Activated CD8-positive, alpha-beta T cell treated with anti-CD3 and anti-CD28 coated beads, Interleukin-2, amount 10 ng/mL, durations not matched to agents 7 days and 5 days (primary cell): ENCODE measurements at regions of chr14 and their contacts with region 1.

Region 1: GRCh38 chr14:55051426-55052268 is at the start of gene MAPK1IP1L:
- DNase-seq: peak; percentile 91
- ATAC-seq: peak; percentile 96
- H3K4me3 Mint-ChIP-seq: peak within 1 kb of the TSS; percentile 80
- H3K27ac Mint-ChIP-seq: peak within 1 kb of the TSS; percentile 84
- H3K4me1 Mint-ChIP-seq: peaks cover 39% of the 10 kb centered on the region
- H3K27me3 Mint-ChIP-seq: no peaks in the 10 kb centered on the region
- total RNA-seq, gene MAPK1IP1L: 105 to 106 TPM

Region 2: GRCh38 chr14:54691525-54692283 is 359.9 kb before region 1 on chr14:
- CTCF ChIA-PET with region 1: no interaction called
- POLR2A ChIA-PET with region 1: no interaction called
- DNase-seq: peak; percentile 53
- ATAC-seq: peak; percentile 69
- H3K4me3 Mint-ChIP-seq: no peak overlapping the region
- H3K27ac Mint-ChIP-seq: no peak overlapping the region
- H3K4me1 Mint-ChIP-seq: peaks cover 28% of the 10 kb centered on the region
- H3K27me3 Mint-ChIP-seq: peaks cover 31% of the 10 kb centered on the region

Region 3: DNA sequence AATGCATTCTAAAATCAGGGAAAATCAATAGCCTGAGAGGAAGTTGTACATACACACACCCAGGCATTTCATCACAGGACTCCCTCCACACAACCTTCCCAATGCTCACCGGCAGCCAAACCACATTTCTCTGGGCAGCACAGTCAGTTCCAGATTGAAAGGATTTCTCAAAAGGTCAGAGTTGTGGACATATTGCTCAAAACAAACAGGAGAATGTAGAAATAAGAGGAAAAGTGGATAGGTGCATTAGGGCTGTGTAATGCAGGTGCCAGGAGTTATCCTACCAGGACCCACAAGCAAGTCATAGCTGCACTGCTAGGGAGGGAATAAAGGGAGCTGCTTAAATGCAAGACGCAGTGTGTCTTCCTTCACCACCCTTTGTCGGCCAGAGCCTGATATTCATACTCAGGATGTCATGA is 211.9 kb before region 1 on chr14:
- CTCF ChIA-PET with region 1: no interaction called
- POLR2A ChIA-PET with region 1: no interaction called
- DNase-seq: no peak
- ATAC-seq: no peak
- H3K4me3 Mint-ChIP-seq: no peak overlapping the region
- H3K27ac Mint-ChIP-seq: no peak overlapping the region
- H3K4me1 Mint-ChIP-seq: no peaks in the 10 kb centered on the region
- H3K27me3 Mint-ChIP-seq: no peaks in the 10 kb centered on the region

Region 4: DNA sequence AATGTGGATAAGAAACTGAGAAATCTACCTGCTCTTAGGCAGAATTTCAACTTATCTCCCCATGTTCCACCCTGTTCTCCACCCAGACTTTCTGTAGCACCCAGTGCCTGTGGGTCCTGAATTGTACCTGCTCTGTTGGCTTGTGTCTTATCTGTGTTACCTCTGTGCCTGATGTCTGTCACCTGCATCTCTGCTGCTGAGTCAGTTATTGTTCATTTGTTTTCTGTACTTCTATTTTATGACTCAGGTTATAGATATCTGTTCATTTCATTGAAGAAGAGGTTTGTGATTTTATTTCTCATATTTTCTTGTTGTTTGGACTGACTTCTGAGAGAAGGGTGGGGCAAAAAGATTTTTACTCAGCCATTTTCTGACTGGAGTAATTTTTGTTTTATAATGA is 12.9 kb before region 1 on chr14:
- CTCF ChIA-PET with region 1: interaction called, 68 read pairs
- POLR2A ChIA-PET with region 1: interaction called, 9 read pairs
- DNase-seq: no peak
- ATAC-seq: no peak
- H3K4me3 Mint-ChIP-seq: no peak overlapping the region
- H3K27ac Mint-ChIP-seq: no peak overlapping the region
- H3K4me1 Mint-ChIP-seq: no peaks in the 10 kb centered on the region
- H3K27me3 Mint-ChIP-seq: no peaks in the 10 kb centered on the region

Region 5: DNA sequence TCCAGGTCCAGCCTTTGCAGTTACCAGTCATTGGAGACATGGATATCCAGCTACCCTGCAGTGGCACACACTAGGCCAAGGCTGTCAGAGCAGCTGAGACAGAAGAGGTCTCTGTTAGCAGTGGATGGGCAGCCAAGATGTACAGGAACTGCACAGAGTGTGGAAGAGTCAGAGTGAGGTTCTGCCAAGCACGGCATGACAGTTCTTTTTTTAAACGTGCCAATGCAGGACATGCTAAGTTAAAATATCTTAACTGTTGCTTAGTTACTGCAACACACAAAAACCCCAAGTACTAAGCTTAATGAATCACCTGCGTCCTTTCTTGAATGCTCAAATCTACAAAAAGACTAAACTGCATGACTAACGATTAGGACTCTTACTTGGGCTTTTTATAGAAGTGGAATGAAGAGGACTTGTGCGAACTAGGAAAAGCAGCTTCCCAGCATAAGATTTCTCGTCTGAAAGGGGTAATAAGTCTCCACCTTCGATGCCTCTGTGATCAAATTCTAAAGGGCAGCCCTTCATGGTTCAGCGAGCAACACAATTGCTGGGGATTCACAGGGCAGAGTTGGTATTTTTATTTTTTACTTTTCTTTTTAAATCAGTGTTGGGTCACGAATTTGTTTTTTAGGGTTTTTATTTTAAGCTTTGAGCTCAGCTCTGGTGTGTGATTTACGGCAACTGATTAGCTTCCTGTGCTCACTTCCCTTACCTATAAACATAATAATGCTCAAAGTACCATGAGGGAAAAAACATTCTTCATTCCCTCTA is 20.4 kb after region 1 on chr14:
- CTCF ChIA-PET with region 1: interaction called, 29 read pairs
- POLR2A ChIA-PET with region 1: interaction called, 15 read pairs
- DNase-seq: no peak
- ATAC-seq: peak; percentile 65
- H3K4me3 Mint-ChIP-seq: no peak overlapping the region
- H3K27ac Mint-ChIP-seq: peak overlapping the region; percentile 57
- H3K4me1 Mint-ChIP-seq: peaks cover 27% of the 10 kb centered on the region
- H3K27me3 Mint-ChIP-seq: no peaks in the 10 kb centered on the region

Region 6: GRCh38 chr14:55094321-55095157 is 42.9 kb after region 1 on chr14:
- CTCF ChIA-PET with region 1: interaction called, 19 read pairs
- POLR2A ChIA-PET with region 1: interaction called, 3 read pairs
- DNase-seq: no peak
- ATAC-seq: no peak
- H3K4me3 Mint-ChIP-seq: no peak overlapping the region
- H3K27ac Mint-ChIP-seq: no peak overlapping the region
- H3K4me1 Mint-ChIP-seq: peaks cover 47% of the 10 kb centered on the region
- H3K27me3 Mint-ChIP-seq: no peaks in the 10 kb centered on the region

Region 7: DNA sequence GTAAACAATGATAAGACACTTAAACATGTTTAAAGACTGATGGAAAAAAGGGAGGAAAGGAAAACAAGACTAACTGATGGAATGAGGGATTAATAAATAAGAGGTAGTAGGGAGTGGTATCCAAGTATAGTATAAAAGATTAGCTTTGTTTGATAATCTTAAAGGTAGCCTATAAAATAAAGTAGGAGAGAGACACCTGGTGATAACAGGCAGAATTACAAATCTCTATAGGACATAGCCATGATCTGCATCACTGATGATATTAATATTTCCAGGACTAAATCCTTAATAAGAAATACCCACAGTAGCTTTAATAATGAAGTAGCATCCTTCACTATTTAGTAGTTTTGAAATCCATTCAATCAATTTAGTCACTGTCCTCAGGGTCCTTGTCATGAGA is 109.3 kb after region 1 on chr14:
- CTCF ChIA-PET with region 1: interaction called, 15 read pairs
- POLR2A ChIA-PET with region 1: interaction called, 5 read pairs
- DNase-seq: no peak
- ATAC-seq: no peak
- H3K4me3 Mint-ChIP-seq: no peak overlapping the region
- H3K27ac Mint-ChIP-seq: no peak overlapping the region
- H3K4me1 Mint-ChIP-seq: peaks cover 12% of the 10 kb centered on the region
- H3K27me3 Mint-ChIP-seq: no peaks in the 10 kb centered on the region